ENCODE measurements at regions of chr10 and their contacts with region 1.

Region 1: DNA sequence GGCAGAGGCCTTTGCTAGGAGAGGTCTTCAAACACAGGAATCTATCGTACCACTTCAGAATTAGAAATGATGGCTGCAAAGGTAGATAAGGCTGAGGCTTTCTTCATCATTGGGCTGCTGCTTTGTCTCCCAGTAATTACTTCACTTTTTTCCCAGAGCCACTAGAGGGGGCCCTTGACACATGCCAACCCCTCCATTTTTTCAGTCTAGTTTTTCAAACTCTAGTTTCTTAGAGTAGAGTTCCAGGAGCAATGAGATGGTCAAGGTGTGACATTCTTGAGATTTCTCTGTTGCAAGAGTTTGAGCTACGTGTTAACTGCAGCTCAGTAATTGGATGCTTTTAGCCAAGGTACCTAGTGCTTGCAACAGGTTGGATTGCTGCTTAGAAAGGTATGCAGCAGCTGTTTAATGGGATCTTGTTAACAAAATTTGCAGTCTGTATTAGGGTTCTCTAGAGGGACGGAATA is 33.8 kb upstream of the RBM20 start:
- DNase-seq: peak; percentile 75
- H3K4me3 Mint-ChIP-seq: no peak overlapping the region
- H3K27ac Mint-ChIP-seq: no peak overlapping the region
- H3K4me1 Mint-ChIP-seq: peaks cover 26% of the 10 kb centered on the region
- H3K27me3 Mint-ChIP-seq: no peaks in the 10 kb centered on the region

Region 2: DNA sequence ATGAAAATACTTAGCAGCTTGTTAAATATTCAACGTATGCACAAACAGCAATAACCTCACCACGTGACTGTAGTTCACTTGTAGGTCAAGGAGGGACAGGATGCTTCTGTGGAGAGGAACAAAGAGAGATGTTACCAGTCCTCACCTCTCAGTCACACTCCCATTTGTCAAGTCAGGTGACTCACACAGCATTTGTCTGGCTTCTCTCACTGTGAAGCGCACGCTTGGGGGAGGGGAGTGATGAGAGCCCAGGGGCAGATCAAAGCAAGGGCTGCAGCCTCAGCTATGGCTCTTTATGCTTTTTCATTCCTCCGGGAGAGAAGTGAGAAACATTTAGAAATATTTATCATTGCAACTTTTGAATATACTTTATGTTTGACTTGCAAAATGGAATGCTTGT is 30.9 kb after region 1 on chr10:
- CTCF ChIA-PET with region 1: interaction called, 7 read pairs
- intact Hi-C with region 1: loop called (anchors 2 kb)
- DNase-seq: peak; percentile 61
- H3K4me3 Mint-ChIP-seq: no peak overlapping the region
- H3K27ac Mint-ChIP-seq: no peak overlapping the region
- H3K4me1 Mint-ChIP-seq: peaks cover 27% of the 10 kb centered on the region
- H3K27me3 Mint-ChIP-seq: peaks cover 46% of the 10 kb centered on the region

Region 3: GRCh38 chr10:110724116-110724921 is 114.0 kb after region 1 on chr10:
- CTCF ChIA-PET with region 1: interaction called, 4 read pairs
- intact Hi-C with region 1: loop called (anchors 2 kb)
- DNase-seq: peak; percentile 48
- H3K4me3 Mint-ChIP-seq: no peak overlapping the region
- H3K27ac Mint-ChIP-seq: no peak overlapping the region
- H3K4me1 Mint-ChIP-seq: peaks cover 42% of the 10 kb centered on the region
- H3K27me3 Mint-ChIP-seq: no peaks in the 10 kb centered on the region

Region 4: GRCh38 chr10:110758898-110759297 is 148.6 kb after region 1 on chr10:
- CTCF ChIA-PET with region 1: no interaction called
- intact Hi-C with region 1: no loop called
- DNase-seq: no peak
- H3K4me3 Mint-ChIP-seq: no peak overlapping the region
- H3K27ac Mint-ChIP-seq: no peak overlapping the region
- H3K4me1 Mint-ChIP-seq: peaks cover 12% of the 10 kb centered on the region
- H3K27me3 Mint-ChIP-seq: no peaks in the 10 kb centered on the region

Region 5: DNA sequence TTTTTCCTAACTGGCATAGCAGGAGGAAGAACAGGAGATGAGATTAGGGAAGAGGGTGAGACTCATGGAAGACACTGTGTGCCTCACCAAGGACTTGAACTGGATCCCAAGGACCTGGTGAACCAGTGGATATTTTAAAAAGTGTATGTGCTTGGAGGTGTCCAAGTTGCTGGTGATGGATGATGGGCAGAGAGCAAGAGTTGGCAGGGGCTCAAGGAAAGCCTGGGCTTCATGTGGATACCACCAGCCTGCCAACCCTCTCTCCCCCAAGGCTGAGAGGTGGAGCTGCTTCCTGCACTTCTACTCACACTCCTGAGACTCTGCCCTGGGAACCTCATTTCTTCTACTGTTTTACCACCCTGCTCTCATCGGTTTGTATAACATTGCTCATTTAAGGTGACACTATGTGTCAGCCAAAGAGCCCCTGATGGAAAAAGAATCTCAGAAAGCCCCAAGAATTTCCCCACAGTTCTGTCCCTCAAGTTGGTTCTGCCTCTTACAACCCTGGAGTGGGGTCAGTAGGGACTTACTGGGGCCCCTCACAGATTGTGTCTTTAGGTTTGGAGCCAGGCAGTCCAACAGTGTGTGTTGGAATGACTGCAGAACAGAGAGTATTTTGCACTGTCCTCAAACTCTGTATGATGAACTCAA is 205.1 kb after region 1 on chr10:
- CTCF ChIA-PET with region 1: no interaction called
- intact Hi-C with region 1: loop called (anchors 5 kb)
- DNase-seq: peak; percentile 56
- H3K4me3 Mint-ChIP-seq: no peak overlapping the region
- H3K27ac Mint-ChIP-seq: peak overlapping the region; percentile 15
- H3K4me1 Mint-ChIP-seq: peaks cover 30% of the 10 kb centered on the region
- H3K27me3 Mint-ChIP-seq: no peaks in the 10 kb centered on the region

Region 6: DNA sequence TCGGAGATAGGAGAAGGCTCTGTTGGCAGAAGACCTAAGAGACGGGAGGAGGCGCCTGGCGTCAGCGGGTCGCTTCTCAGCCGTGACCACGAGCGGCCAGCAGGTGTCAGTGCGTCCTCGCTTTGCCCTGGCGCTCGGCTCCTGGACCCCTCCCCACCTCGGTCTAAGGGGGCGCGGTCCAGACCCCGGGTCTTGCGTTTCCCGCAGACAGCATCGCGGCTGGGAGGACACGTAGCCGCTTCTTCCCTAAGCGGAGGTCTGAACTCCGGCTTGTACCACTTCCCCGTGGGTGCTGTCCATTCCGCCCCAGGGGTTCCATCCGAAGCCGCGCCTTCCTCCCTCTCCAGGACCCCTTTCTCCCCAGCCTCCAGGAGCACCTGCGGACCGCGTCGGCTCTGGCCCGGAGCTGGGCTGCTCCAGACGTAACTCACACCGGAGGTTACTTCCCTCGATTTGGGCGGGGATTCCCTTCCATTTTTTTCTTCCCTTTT is 465.9 kb after region 1 on chr10:
- CTCF ChIA-PET with region 1: interaction called, 4 read pairs
- intact Hi-C with region 1: loop called (anchors 1 kb)
- DNase-seq: peak; percentile 68
- H3K4me3 Mint-ChIP-seq: peak overlapping the region; percentile 71
- H3K27ac Mint-ChIP-seq: no peak overlapping the region
- H3K4me1 Mint-ChIP-seq: peaks cover 11% of the 10 kb centered on the region
- H3K27me3 Mint-ChIP-seq: peaks cover 55% of the 10 kb centered on the region

Region 7: DNA sequence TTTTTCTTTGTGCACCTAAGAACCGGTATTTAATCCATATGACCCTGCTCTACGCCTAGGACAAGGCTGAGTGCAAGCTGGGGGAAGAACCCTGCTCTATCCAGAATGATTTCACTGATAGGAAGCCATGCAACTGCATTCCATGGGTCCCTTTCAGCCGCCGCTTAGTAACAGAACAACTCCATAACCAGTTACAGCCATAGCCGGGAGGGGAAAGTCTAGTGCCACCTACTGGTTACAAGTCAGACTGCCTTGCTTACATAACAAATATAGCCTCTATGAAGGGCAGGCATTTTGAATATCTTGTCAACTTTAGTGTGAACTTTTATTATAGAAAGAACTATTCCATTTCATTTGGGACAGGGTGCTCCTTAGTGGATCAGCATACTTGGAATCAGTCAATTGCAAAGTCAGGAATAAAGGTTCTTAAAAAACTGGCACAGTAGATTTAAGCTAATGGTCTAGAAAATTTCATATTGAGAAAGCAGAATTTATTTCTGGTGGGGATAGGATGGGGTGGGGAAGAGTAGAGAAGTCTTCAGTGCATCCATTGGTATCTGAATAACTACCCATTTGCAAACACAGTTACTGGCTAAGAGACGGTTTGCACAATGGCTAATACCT is 988.2 kb after region 1 on chr10:
- CTCF ChIA-PET with region 1: interaction called, 3 read pairs
- intact Hi-C with region 1: loop called (anchors 1 kb)
- DNase-seq: peak; percentile 70
- H3K4me3 Mint-ChIP-seq: no peak overlapping the region
- H3K27ac Mint-ChIP-seq: no peak overlapping the region
- H3K4me1 Mint-ChIP-seq: no peaks in the 10 kb centered on the region
- H3K27me3 Mint-ChIP-seq: no peaks in the 10 kb centered on the region

Region 8: DNA sequence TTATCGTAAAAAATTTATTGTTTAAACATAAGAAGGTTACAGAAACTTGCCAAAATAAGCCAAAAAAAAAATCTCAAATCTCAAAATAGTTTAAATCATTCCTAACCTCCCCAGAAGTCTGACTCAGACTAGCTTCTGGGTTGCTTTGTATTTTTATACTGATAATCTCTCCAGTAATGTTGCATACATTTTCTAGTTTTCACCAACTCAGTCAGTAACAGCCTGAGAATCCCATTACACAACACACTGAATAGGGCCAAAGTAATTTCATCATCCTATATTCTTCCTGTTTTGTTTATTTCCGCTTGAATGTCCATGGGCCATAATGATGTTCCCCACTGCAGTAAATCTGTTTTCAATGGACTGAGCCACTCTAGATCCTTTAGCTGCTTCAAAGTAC is 1094.7 kb after region 1 on chr10:
- CTCF ChIA-PET with region 1: no interaction called
- intact Hi-C with region 1: no loop called
- DNase-seq: no peak
- H3K4me3 Mint-ChIP-seq: no peak overlapping the region
- H3K27ac Mint-ChIP-seq: no peak overlapping the region
- H3K4me1 Mint-ChIP-seq: no peaks in the 10 kb centered on the region
- H3K27me3 Mint-ChIP-seq: no peaks in the 10 kb centered on the region